Activated CD4-positive, alpha-beta memory T cell treated with anti-CD3 and anti-CD28 coated beads, Interleukin-2, amount 10 ng/mL, durations not matched to agents 7 days and 5 days (primary cell): ENCODE measurements at regions of chr10 and their contacts with region 1.

Region 1: DNA sequence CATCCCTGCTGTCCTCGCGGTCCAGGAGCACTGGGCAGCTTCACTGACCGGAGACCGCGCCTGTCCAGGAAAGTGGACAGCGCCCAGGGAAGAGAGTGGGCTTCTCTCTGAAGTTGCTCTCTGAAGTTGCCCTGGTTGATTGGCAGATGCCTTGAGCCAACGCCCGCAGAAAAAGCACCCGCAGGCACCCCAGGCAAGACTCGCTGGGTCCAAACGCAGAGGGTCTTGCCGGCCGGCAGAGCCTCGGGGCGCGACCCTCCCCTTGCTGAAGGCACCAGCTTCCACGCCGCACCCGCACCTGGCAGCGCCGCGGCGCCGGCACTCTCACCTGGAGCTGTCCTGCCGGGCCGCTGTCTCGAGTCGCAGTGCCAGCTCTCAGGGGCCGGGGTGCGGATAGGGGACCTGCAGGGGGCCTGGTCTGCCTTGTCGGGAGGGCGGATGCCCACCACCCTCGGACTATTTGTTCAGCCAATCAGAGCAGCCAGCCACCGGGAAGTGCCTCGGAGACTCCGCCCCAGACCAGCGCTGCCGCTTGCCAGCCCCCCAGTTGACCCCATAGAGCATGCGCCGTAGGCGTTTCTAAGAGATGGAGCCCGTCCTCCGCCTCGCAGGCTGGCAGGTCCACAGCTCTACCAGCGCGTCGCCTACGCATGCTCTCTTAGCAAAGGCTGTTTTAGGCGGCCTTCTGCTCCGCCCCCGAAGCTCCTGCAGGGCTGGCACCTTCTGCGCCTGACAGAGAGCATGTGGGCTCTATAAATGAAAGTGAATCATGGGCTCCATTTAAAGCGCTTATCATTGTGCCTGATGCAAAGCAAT is at the start of gene LIPA:
- DNase-seq: peak; percentile 95
- H3K4me3 Mint-ChIP-seq: peak within 1 kb of the TSS; percentile 86
- H3K27ac Mint-ChIP-seq: peak within 1 kb of the TSS; percentile 65
- H3K4me1 Mint-ChIP-seq: peaks cover 25% of the 10 kb centered on the region
- H3K27me3 Mint-ChIP-seq: peaks cover 9% of the 10 kb centered on the region
- total RNA-seq, gene LIPA: 40.3 to 42.4 TPM

Region 2: DNA sequence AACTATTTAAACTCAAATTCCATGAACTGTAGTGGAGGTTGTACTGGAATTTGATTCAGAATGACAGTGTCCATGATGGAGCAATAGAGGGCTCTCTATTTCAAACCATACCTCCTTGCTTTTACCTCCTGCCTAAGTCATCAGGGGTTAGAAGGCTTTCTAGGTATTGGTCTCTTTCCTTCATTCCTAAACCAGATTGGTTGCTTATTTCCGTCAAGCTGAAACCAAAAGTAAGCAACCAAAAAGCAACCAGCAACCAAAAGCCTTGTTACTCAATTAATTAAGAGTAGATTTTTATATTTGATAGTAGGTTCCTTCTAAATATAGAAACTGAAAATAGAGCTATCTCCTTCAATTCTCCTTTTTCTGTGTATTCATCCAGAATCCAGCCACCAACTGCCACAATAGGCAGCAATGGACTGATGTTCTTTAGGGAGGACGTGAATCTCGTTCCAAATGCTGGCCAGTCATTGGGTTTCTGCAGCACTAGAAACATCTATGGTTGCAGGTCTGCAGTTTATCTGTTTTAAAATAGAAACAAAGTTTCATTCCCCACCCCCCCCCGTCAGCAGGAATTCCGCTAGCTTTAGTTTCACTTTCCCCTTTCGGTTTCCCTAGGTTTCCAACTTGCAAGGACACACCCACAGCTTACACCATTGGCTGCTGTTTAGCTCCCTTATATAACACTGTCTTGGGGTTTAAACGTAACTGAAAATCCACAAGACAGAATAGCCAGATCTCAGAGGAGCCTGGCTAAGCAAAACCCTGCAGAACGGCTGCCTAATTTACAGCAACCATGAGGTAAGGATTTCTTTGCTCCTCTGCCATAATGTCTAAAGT is 140.5 kb after region 1 on chr10 and contains the start of gene IFIT1:
- CTCF ChIA-PET with region 1: interaction called, 3 read pairs
- POLR2A ChIA-PET with region 1: interaction called, 10 read pairs
- DNase-seq: peak; percentile 65
- H3K4me3 Mint-ChIP-seq: peak within 1 kb of the TSS; percentile 87
- H3K27ac Mint-ChIP-seq: peak within 1 kb of the TSS; percentile 90
- H3K4me1 Mint-ChIP-seq: peaks cover 43% of the 10 kb centered on the region
- H3K27me3 Mint-ChIP-seq: no peaks in the 10 kb centered on the region
- total RNA-seq, gene IFIT1: 69.8 to 71.6 TPM

Region 3: DNA sequence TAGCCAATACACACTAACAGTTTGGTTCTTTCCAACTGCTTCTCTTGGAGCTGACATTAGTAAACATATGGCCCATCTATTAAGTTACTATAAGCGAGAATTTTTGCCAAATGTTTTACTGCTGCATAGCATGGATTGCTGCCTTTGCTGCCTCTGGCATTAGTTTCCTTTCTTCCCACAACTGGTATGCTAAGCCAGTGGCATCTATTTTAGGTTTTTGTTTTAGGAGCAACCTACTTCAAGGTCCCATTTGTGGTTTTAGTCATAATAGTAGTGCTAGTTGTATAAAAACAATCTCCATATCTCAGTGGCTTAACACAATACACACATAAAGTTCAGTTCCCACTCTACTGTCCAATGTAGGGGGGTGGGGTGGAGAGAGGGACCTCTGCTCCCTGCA is 419.3 kb after region 1 on chr10:
- CTCF ChIA-PET with region 1: no interaction called
- POLR2A ChIA-PET with region 1: no interaction called
- DNase-seq: no peak
- H3K4me3 Mint-ChIP-seq: no peak overlapping the region
- H3K27ac Mint-ChIP-seq: no peak overlapping the region
- H3K4me1 Mint-ChIP-seq: no peaks in the 10 kb centered on the region
- H3K27me3 Mint-ChIP-seq: peaks cover 15% of the 10 kb centered on the region